ENCODE measurements at regions of chr3 and their contacts with region 1.

Region 1: GRCh38 chr3:148861277-148861869 is 3.7 kb upstream of the CPA3 start:
- DNase-seq: no peak
- H3K4me3 ChIP-seq: no peak overlapping the region
- H3K27ac ChIP-seq: no peak overlapping the region
- H3K4me1 ChIP-seq: no peaks in the 10 kb centered on the region
- H3K27me3 ChIP-seq: no peaks in the 10 kb centered on the region
- CTCF ChIP-seq: peak; percentile 41 to 73 (median 60)
- POLR2A ChIP-seq: no peak

Region 2: GRCh38 chr3:148930752-148931151 is 69.4 kb after region 1 on chr3:
- intact Hi-C with region 1: loop called (anchors 5 kb)
- DNase-seq: no peak
- H3K4me3 ChIP-seq: no peak overlapping the region
- H3K27ac ChIP-seq: no peak overlapping the region
- H3K4me1 ChIP-seq: no peaks in the 10 kb centered on the region
- H3K27me3 ChIP-seq: no peaks in the 10 kb centered on the region
- CTCF ChIP-seq: no peak
- POLR2A ChIP-seq: no peak

Region 3: GRCh38 chr3:148943506-148944205 is 82.3 kb after region 1 on chr3:
- intact Hi-C with region 1: loop called (anchors 5 kb)
- DNase-seq: no peak
- H3K4me3 ChIP-seq: no peak overlapping the region
- H3K27ac ChIP-seq: no peak overlapping the region
- H3K4me1 ChIP-seq: no peaks in the 10 kb centered on the region
- H3K27me3 ChIP-seq: no peaks in the 10 kb centered on the region
- CTCF ChIP-seq: peak in 5 of 6 experiments; percentile 28 to 76 (median 64)
- POLR2A ChIP-seq: no peak

Region 4: DNA sequence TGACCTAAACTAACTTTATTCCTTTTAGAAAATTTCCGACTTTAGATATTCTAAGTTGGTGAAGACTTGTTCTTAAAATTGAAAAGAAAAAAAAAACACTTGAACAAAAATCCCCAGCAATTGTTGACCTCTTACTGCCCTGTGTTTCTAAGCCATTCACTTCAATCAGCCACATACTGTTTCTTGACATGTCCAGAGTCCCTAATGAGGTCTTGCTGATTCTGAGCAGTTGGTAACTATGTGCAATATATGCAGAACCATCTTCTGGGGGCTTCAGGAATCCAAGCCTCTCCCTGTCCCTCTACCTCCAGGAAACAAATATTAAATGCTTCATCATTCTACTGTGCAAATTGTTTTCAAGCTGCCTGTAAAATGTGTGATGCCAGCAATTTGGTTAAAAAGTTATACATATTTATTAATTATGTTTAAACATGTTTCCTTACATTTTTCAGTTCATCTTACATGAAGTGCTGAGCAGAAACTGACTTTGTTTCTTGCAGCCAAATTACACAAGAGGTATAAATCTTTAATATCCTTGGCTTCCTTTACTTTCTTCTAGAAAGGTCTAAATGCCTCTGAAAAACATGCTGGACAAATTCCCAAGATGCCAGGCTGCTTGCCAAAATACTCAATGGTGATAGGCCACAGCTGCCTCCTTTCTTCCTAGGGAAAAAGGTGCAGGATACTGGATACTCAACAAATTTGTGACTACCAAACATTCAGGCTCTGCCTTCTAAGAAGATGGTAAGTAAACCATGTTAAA is 110.2 kb after region 1 on chr3:
- intact Hi-C with region 1: no loop called
- DNase-seq: peak; percentile 23 to 55
- H3K4me3 ChIP-seq: no peak overlapping the region
- H3K27ac ChIP-seq: no peak overlapping the region
- H3K4me1 ChIP-seq: no peaks in the 10 kb centered on the region
- H3K27me3 ChIP-seq: no peaks in the 10 kb centered on the region
- CTCF ChIP-seq: no peak
- POLR2A ChIP-seq: no peak

Measured in thyroid gland (tissue), 4 donors.